ENCODE measurements at regions of chr4 and their contacts with region 1.

Region 1: GRCh38 chr4:75565481-75565880 is 9.6 kb downstream of the ODAPH start:
- DNase-seq: no peak
- H3K4me3 ChIP-seq: no peak overlapping the region
- H3K4me3 Mint-ChIP-seq: no peak overlapping the region
- H3K27ac ChIP-seq: no peak overlapping the region
- H3K27ac Mint-ChIP-seq: peak overlapping the region in 1 of 8 donors; percentile 30
- H3K4me1 ChIP-seq: no peaks in the 10 kb centered on the region
- H3K4me1 Mint-ChIP-seq: peaks cover 5 to 7% (median 5%) of the 10 kb centered on the region in 3 donors
- H3K27me3 ChIP-seq: no peaks in the 10 kb centered on the region
- H3K27me3 Mint-ChIP-seq: peaks cover 6 to 14% of the 10 kb centered on the region in 2 donors

Region 2: DNA sequence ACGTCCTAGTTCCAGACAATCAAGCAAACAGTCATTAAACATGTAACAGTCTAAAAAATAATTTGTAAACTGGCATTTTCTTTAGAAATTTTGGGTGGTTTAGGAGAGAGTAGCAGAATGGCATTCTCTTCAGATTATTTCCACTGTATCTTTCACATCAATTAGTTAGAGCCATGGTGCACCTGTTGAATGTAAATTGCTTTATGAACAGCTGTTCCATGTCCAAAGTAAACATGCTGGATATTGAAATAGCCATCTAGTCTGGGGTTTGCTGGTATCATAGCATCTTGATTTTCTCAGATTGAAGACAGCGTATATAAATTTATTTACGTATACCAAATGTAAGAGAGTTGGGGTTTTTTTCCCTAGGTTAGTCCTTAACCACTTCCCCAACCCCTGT is 194.9 kb before region 1 on chr4:
- CTCF ChIA-PET with region 1: no interaction called
- POLR2A ChIA-PET with region 1: no interaction called
- DNase-seq: no peak
- H3K4me3 ChIP-seq: no peak overlapping the region
- H3K4me3 Mint-ChIP-seq: no peak overlapping the region
- H3K27ac ChIP-seq: no peak overlapping the region
- H3K27ac Mint-ChIP-seq: no peak overlapping the region
- H3K4me1 ChIP-seq: no peaks in the 10 kb centered on the region
- H3K4me1 Mint-ChIP-seq: no peaks in the 10 kb centered on the region
- H3K27me3 ChIP-seq: no peaks in the 10 kb centered on the region
- H3K27me3 Mint-ChIP-seq: peaks cover 2 to 12% of the 10 kb centered on the region in 2 donors

Region 3: DNA sequence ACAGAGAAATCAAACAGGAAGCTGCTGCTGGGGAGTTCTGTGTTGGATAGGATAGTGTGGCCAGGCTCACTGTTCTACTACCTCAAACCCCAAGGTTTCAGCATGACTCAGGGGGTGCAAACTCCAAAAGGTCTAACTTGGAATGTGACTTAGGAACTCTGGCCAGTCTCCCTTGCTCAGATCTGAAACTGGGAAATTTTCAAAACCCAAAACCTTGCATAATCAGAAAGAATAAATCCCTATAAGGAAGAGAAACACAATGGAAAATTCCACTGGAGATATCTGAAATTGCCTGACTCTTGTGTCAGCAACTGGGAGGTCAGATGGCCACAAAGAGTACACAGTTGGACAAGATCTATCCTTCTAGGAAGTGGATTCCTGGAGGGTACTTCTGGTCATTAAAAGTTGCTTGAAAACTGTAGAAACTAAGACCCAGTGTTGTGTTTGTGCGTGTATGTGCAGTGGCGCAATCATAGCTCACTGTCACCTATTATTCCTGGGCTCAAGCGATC is 278.7 kb after region 1 on chr4:
- CTCF ChIA-PET with region 1: interaction called, 18 read pairs
- POLR2A ChIA-PET with region 1: no interaction called
- DNase-seq: no peak
- H3K4me3 ChIP-seq: no peak overlapping the region
- H3K4me3 Mint-ChIP-seq: no peak overlapping the region
- H3K27ac ChIP-seq: no peak overlapping the region
- H3K27ac Mint-ChIP-seq: no peak overlapping the region
- H3K4me1 ChIP-seq: no peaks in the 10 kb centered on the region
- H3K4me1 Mint-ChIP-seq: peaks cover 0 to 3% (median 0%) of the 10 kb centered on the region in 3 donors
- H3K27me3 ChIP-seq: peaks cover under 1% of the 10 kb centered on the region
- H3K27me3 Mint-ChIP-seq: peaks cover 1 to 7% of the 10 kb centered on the region in 2 donors